ENCODE measurements at regions of chr18 and their contacts with region 1.

Region 1: GRCh38 chr18:26548429-26549262 is at the start of gene KCTD1:
- DNase-seq: peak; percentile 81
- H3K4me3 Mint-ChIP-seq: peak within 1 kb of the TSS; percentile 75
- H3K27ac Mint-ChIP-seq: no peak within 1 kb of the TSS
- H3K4me1 Mint-ChIP-seq: peaks cover 43% of the 10 kb centered on the region
- H3K27me3 Mint-ChIP-seq: peaks cover 28% of the 10 kb centered on the region
- total RNA-seq, gene KCTD1: 2.5 to 3.2 TPM

Region 2: DNA sequence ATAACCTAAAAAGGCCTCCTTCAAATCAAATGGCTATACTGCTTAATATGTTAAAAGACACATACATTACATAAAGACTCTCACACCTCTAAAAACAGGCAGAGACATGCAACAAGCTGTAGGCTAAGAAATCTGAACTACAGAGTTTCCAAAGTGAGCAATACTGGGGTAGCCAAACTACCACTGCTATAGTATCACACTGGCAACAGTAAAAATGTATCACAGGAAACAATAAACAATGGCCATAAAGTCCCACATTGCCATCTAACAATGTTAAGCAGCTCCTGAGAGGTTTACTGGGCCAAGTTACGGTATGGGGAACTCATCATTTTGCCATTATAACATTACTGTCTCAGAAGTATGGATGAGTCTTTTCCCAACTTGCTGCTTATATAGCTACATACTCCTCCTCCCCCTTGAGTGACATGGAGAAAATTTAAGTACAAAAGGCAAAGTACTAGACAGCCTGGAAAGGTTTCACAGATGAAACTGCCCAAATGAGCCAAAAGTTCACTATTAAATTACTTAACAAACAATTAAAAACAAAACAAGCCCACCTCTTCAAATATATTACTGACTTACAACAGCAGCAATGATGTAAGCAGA is 508.5 kb before region 1 on chr18:
- CTCF ChIA-PET with region 1: no interaction called
- POLR2A ChIA-PET with region 1: no interaction called
- intact Hi-C with region 1: loop called (anchors 10 kb)
- DNase-seq: no peak
- H3K4me3 Mint-ChIP-seq: no peak overlapping the region
- H3K27ac Mint-ChIP-seq: no peak overlapping the region
- H3K4me1 Mint-ChIP-seq: peaks cover 15% of the 10 kb centered on the region
- H3K27me3 Mint-ChIP-seq: no peaks in the 10 kb centered on the region

Region 3: DNA sequence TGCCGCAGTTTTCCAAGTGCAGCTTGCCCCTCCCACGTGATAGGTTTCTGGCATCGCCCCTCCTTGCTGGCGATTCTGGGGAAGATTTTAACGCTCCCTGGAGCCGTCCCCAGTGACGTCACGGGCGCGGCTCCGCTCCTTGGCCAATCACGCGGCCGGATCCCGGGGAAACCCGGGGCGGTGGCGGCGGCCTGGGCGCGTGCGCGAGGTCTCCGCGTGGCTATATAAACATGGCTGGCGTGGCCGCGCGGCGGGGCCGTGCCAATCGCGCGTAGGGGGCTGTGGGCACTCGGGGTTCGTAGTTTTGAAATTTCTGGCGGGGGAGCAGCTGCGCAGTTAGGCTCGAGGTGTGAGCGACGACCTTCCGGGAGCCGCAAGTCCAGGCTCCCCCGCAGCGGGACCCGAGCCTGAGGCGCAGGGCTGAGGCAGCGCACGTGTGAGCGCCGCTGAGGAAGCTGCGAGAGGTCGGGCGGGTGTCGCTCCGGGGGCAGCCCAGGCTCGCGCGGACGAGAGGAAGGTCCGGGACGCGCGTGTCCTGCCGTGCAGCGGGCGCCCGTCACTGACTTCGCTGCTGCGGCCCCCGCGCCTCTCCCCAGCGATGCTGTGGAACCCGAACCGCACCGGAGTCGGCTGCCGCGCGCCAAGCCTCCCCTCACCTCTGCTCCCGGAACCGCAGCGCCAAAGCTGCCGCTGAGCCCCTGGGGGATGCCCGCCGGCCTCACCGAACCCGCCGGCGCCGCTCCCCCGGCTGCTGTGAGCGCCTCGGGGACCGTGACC is 322.2 kb before region 1 on chr18 and contains the start of gene TAF4B:
- CTCF ChIA-PET with region 1: no interaction called
- POLR2A ChIA-PET with region 1: no interaction called
- intact Hi-C with region 1: loop called (anchors 10 kb)
- DNase-seq: peak; percentile 95
- H3K4me3 Mint-ChIP-seq: peak within 1 kb of the TSS; percentile 90
- H3K27ac Mint-ChIP-seq: peak within 1 kb of the TSS; percentile 94
- H3K4me1 Mint-ChIP-seq: peaks cover 35% of the 10 kb centered on the region
- H3K27me3 Mint-ChIP-seq: no peaks in the 10 kb centered on the region
- total RNA-seq, gene TAF4B: 12.5 to 12.7 TPM

Region 4: DNA sequence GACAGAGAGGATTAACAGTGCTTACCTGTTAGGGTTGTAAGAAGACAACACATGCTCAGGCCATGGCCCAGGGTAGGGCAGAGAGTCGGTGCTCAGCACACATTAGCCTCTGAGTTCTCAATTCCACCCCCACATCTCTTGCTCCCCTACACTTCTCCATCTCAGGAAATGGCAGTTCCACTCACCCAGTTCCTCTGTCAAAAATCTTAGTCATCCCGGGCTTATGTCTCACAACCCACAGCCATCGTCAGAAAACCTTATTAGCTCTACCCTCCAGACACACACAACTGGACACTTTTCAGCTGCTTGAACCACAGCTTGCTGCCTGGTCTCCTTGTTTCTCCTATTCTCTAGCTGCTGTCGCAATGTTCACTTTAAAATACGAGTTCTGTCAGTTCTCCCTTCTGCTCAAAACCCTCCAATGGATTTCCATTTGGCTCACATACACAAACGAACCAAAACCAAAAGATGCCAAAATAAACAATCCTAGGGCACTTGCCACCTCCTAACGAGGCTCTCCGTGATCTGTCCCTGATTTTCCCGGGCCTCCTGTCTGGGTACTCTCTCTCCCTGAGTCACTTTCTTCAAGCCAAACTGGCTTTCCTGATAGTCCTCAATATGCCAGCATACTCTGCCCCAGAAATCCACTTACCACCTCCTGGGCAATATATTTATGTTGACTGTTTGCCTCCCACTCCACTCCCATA is 90.0 kb before region 1 on chr18:
- CTCF ChIA-PET with region 1: interaction called, 3 read pairs
- POLR2A ChIA-PET with region 1: no interaction called
- intact Hi-C with region 1: loop called (anchors 5 kb)
- DNase-seq: peak; percentile 30
- H3K4me3 Mint-ChIP-seq: no peak overlapping the region
- H3K27ac Mint-ChIP-seq: no peak overlapping the region
- H3K4me1 Mint-ChIP-seq: peaks cover 9% of the 10 kb centered on the region
- H3K27me3 Mint-ChIP-seq: no peaks in the 10 kb centered on the region

Region 5: DNA sequence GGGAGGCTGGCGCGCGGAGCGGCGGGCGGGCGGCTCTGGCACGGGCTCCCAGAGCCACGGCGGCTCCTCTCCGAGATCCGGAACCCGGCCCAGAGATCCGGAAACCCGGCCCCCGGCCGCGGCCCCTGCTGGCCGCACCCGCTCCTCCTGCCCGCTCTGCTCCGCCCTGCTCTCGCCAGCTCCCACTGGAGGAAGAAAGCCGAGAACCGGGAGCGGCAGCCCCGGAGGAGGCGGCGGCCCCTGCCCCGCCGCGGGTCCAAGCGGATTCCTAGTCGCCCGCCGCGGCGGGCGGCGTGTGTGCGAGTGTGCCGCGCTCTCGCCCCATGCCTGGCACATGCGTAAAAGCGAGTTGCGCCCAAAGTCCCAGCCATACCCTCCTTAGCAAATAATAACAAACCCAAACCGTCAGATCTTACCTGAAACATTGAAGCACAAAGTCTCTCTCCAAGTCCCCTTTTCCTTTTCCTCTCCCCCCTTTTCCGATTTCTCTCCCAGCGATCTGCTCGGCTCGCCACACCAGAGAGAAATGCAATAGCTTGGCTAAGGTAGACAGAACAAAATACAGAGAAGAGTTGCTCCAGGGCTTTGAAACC is 108.4 kb after region 1 on chr18:
- CTCF ChIA-PET with region 1: no interaction called
- POLR2A ChIA-PET with region 1: no interaction called
- intact Hi-C with region 1: loop called (anchors 5 kb)
- DNase-seq: no peak
- H3K4me3 Mint-ChIP-seq: peak overlapping the region; percentile 61
- H3K27ac Mint-ChIP-seq: no peak overlapping the region
- H3K4me1 Mint-ChIP-seq: peaks cover 12% of the 10 kb centered on the region
- H3K27me3 Mint-ChIP-seq: peaks cover 53% of the 10 kb centered on the region

Region 6: GRCh38 chr18:27030416-27030815 is 481.8 kb after region 1 on chr18:
- CTCF ChIA-PET with region 1: no interaction called
- POLR2A ChIA-PET with region 1: no interaction called
- intact Hi-C with region 1: no loop called
- DNase-seq: no peak
- H3K4me3 Mint-ChIP-seq: no peak overlapping the region
- H3K27ac Mint-ChIP-seq: no peak overlapping the region
- H3K4me1 Mint-ChIP-seq: no peaks in the 10 kb centered on the region
- H3K27me3 Mint-ChIP-seq: no peaks in the 10 kb centered on the region

Measured in activated CD4-positive, alpha-beta memory T cell treated with anti-CD3 and anti-CD28 coated beads for 36 hours (primary cell).